Gastrocnemius medialis (tissue), 4 donors: ENCODE measurements at regions of chr13 and their contacts with region 1.

Region 1: DNA sequence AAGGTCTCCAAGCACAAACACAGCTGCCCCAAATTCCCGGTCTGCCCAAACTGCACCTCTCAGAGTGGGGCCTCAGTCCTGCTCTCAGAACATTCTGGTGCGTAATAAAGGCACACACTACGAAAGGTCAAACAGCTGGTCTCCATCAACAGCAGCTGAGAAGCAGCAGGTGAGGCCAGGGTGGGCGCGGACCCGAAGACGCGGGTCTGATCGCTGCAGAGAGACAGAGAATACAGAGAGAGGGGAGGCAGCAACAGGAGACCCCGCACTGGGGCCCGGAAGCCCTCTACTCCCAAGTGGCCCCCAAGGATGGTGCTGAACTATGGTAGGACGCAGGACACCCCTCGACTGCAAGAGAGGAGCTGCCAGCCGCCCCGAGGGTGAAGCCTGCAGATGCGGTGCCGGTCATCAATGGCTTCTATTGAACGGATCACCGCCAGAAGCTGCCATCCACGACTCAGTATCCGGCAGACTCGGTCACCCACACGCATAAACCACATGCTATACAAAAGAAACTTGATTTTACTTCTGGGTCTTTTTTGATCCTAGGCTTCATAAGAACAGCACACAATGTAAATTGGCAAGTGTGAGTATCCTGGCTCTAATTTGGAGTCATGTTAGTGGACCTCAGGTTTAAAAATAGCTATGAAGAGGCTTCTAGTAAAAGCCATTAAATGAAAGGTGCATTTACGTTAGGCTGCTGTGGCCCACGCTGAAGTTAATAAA is 33.4 kb downstream of the STK24 start:
- DNase-seq: no peak
- ATAC-seq: peak; percentile 38 to 39
- H3K4me3 ChIP-seq: peak overlapping the region; percentile 3 to 35 (median 20)
- H3K27ac ChIP-seq: peak overlapping the region; percentile 48 to 65 (median 59)
- H3K4me1 ChIP-seq: peaks cover 61 to 93% of the 10 kb centered on the region in 2 donors
- H3K27me3 ChIP-seq: no peaks in the 10 kb centered on the region
- CTCF ChIP-seq: no peak
- POLR2A ChIP-seq: no peak

Region 2: GRCh38 chr13:98454389-98454881 is 89.1 kb before region 1 on chr13:
- in situ Hi-C with region 1: no loop called
- intact Hi-C with region 1: no loop called
- DNase-seq: no peak
- ATAC-seq: peak; percentile 73 to 79
- H3K4me3 ChIP-seq: no peak overlapping the region
- H3K27ac ChIP-seq: peak overlapping the region; percentile 51 to 77 (median 70)
- H3K4me1 ChIP-seq: peaks cover 15 to 35% of the 10 kb centered on the region in 2 donors
- H3K27me3 ChIP-seq: no peaks in the 10 kb centered on the region
- CTCF ChIP-seq: no peak
- POLR2A ChIP-seq: peak in 1 of 2 donors; percentile 26

Region 3: GRCh38 chr13:98565726-98566565 is 22.4 kb after region 1 on chr13:
- in situ Hi-C with region 1: no loop called
- intact Hi-C with region 1: loop called (anchors 2 kb)
- DNase-seq: peak in 1 of 2 donors; percentile 45
- ATAC-seq: peak; percentile 54 to 66
- H3K4me3 ChIP-seq: peak overlapping the region; percentile 16 to 44 (median 27)
- H3K27ac ChIP-seq: peak overlapping the region; percentile 63 to 79 (median 76)
- H3K4me1 ChIP-seq: peaks cover 67 to 82% of the 10 kb centered on the region in 2 donors
- H3K27me3 ChIP-seq: no peaks in the 10 kb centered on the region
- CTCF ChIP-seq: no peak
- POLR2A ChIP-seq: no peak

Region 4: GRCh38 chr13:99028890-99029289 is 485.3 kb after region 1 on chr13:
- in situ Hi-C with region 1: no loop called
- intact Hi-C with region 1: no loop called
- DNase-seq: no peak
- ATAC-seq: no peak
- H3K4me3 ChIP-seq: no peak overlapping the region
- H3K27ac ChIP-seq: no peak overlapping the region
- H3K4me1 ChIP-seq: peaks cover 0 to 6% of the 10 kb centered on the region in 2 donors
- H3K27me3 ChIP-seq: no peaks in the 10 kb centered on the region
- CTCF ChIP-seq: no peak
- POLR2A ChIP-seq: no peak